ENCODE measurements at regions of chr2 and their contacts with region 1.

Region 1: GRCh38 chr2:232632908-232633732 is at the start of gene EFHD1:
- DNase-seq: peak; percentile 19 to 87 (median 78)
- H3K4me3 ChIP-seq: peak within 1 kb of the TSS; percentile 41 to 93 (median 77)
- H3K27ac ChIP-seq: peak within 1 kb of the TSS; percentile 71 to 99 (median 94)
- H3K27me3 ChIP-seq: peaks cover 0 to 61% (median 10%) of the 10 kb centered on the region in 45 donors
- CTCF ChIP-seq: peak in 48 of 56 donors; percentile 17 to 72 (median 38)
- total RNA-seq, gene EFHD1: 50.7 to 624 (median 173) TPM

Region 2: GRCh38 chr2:232611551-232612218 is 21.4 kb before region 1 on chr2:
- intact Hi-C with region 1: loop called in 1 of 2 experiments (anchors 2 kb)
- DNase-seq: peak in 9 of 10 donors; percentile 31 to 88 (median 76)
- H3K4me3 ChIP-seq: no peak overlapping the region
- H3K27ac ChIP-seq: peak overlapping the region in 43 of 59 donors; percentile 2 to 79 (median 51)
- H3K27me3 ChIP-seq: no peaks in the 10 kb centered on the region
- CTCF ChIP-seq: peak; percentile 49 to 93 (median 86)

Region 3: GRCh38 chr2:232668805-232669444 is 35.8 kb after region 1 on chr2:
- intact Hi-C with region 1: loop called (anchors 1 to 5 kb)
- DNase-seq: peak in 5 of 10 donors; percentile 32 to 72 (median 56)
- H3K4me3 ChIP-seq: peak overlapping the region in 7 of 59 donors; percentile 7 to 55 (median 43)
- H3K27ac ChIP-seq: peak overlapping the region in 58 of 59 donors; percentile 38 to 98 (median 92)
- H3K27me3 ChIP-seq: no peaks in the 10 kb centered on the region
- CTCF ChIP-seq: peak in 53 of 56 donors; percentile 32 to 81 (median 58)

Region 4: DNA sequence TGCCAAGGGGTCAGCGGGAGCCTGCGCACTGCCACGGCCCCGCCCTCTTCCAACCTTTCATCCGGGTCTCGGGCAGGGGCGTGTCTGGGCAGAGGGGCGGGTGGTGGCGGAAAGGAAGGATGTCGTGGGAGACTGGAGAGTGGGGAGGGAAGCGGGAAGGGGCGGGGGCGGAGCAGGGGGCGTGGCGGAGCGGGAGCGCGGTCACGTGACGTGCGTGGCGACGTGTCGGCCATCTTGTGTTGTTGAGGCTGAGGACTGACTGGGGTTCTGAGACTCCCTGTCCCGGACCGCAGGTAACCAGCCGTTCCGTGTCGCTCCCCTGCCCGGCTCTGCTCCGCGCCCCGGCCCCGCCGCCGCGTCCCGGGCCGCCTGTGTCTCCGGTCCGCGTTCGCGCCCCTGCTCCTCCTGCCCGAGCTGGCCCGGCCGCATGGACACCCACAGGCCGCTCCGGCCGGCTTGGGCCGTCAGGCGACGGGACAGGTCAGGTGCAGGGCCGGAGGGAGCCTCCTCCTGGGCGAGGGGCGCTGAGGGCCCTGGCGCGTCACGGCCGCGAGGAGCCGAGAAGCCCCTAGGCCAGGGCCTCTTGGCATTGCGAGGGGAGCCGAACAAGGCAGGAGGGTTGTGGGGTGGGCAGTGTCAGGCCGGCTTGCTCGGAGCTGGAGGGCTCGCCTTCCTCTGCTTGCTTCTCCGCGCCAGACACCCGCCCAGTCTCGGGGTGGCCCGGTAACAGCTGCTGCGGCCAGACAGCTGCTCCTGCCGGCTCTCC is 64.2 kb after region 1 on chr2 and contains the start of gene GIGYF2:
- intact Hi-C with region 1: loop called in 1 of 2 experiments (anchors 2 kb)
- DNase-seq: peak; percentile 90 to 97 (median 94)
- H3K4me3 ChIP-seq: peak within 1 kb of the TSS; percentile 68 to 100 (median 95)
- H3K27ac ChIP-seq: peak within 1 kb of the TSS; percentile 79 to 98 (median 94)
- H3K27me3 ChIP-seq: no peaks in the 10 kb centered on the region
- CTCF ChIP-seq: peak in 25 of 56 donors; percentile 4 to 47 (median 18)
- total RNA-seq, gene GIGYF2: 78.1 to 153 (median 103) TPM

Measured in dorsolateral prefrontal cortex (tissue), 120 donors.